ENCODE measurements at regions of chr3 and their contacts with region 1.

Region 1: DNA sequence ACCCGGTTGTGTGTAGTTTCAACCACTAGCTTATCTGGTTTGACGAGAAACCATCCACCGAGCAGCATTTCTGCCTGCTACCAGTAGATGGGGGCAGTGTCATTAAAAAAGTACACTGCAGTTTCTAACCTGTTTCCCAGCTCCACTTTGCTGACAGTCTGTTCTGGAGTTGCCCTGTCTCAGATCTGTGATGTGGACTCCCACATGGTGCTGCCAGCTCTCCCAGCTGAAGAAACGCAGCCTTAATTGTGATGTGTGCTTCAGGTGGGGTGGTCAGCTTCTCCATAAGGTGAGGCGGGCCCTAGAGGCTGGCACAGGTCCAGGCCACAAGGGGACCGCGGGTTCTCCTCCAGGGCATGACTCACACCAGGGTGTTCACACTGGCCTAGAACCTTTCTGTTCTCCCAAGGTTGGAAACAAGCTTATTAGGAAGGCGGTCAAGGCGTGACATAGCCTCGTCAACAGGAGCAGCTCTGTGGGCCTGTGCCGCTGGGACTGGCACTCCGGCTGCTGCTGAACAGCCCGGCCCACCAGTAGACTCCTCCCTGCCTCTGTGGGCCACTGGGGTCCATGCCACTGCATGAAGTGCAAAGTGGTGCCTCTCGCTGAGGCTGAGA is 2.9 kb upstream of the FAM43A start:
- DNase-seq: peak; percentile 89
- H3K4me3 Mint-ChIP-seq: peak overlapping the region; percentile 6
- H3K27ac Mint-ChIP-seq: no peak overlapping the region
- H3K4me1 Mint-ChIP-seq: peaks cover 29% of the 10 kb centered on the region
- H3K27me3 Mint-ChIP-seq: peaks cover 41% of the 10 kb centered on the region
- CTCF ChIP-seq: peak; percentile 96

Region 2: DNA sequence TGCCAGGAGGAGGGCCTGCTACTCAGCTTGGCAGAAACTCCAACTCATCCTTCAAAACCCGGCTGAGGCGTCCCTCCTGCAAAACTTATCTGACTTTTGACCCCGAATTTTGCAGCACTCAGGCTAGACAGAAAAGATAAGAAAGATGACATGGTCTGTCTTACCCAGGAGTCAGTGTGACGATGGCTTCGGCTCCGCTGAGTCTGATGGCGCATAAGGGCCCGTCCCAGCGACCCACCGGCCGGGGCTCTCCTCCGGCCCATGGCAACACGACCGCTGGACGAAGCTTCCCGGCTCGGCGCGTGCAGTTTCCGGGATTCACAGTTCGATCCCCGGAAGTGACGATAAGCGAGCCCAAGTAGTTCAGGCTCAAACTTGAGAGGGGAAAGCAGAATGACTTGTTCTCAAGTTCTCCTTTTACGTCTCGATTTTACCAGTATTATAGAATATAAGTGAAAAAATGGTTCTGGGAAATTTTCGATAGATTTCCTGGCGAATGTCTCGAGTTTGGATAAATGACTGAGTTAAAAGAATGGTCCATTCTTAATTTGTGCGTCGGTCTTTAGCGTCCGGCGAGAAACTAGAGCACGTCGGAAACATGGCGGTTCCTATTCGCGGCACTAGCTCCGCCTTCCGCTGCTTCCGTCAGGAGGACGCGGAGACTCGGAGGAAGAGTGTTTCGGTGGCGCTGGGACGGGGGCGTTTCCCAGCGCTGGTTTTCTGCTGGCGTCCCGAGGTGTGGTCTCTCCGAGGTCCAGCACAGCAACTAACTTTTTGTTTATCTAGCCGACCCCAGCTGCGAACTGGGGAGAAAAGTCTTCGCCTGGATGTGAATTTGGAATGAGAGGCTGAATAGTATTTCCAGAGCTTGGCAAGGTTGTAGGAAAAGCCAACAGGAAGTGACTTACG is 10.6 kb before region 1 on chr3 and contains the start of gene LSG1:
- CTCF ChIA-PET with region 1: interaction called, 83 read pairs
- intact Hi-C with region 1: no loop called
- DNase-seq: peak; percentile 94
- H3K4me3 Mint-ChIP-seq: peak within 1 kb of the TSS; percentile 100
- H3K27ac Mint-ChIP-seq: peak within 1 kb of the TSS; percentile 99
- H3K4me1 Mint-ChIP-seq: peaks cover 53% of the 10 kb centered on the region
- H3K27me3 Mint-ChIP-seq: peaks cover 30% of the 10 kb centered on the region
- CTCF ChIP-seq: no peak
- total RNA-seq, gene LSG1: 86.3 and 90.8 TPM in 2 replicates

Region 3: GRCh38 chr3:194769020-194769643 is 86.3 kb after region 1 on chr3:
- CTCF ChIA-PET with region 1: interaction called, 11 read pairs
- intact Hi-C with region 1: loop called (anchors 10 kb)
- DNase-seq: peak; percentile 95
- H3K4me3 Mint-ChIP-seq: peak overlapping the region; percentile 74
- H3K27ac Mint-ChIP-seq: peak overlapping the region; percentile 39
- H3K4me1 Mint-ChIP-seq: peaks cover 32% of the 10 kb centered on the region
- H3K27me3 Mint-ChIP-seq: peaks cover 35% of the 10 kb centered on the region
- CTCF ChIP-seq: no peak

Region 4: GRCh38 chr3:194871143-194871863 is 188.5 kb after region 1 on chr3:
- CTCF ChIA-PET with region 1: interaction called, 11 read pairs
- intact Hi-C with region 1: no loop called
- DNase-seq: peak; percentile 65
- H3K4me3 Mint-ChIP-seq: peak overlapping the region; percentile 1
- H3K27ac Mint-ChIP-seq: peak overlapping the region; percentile 3
- H3K4me1 Mint-ChIP-seq: peaks cover 22% of the 10 kb centered on the region
- H3K27me3 Mint-ChIP-seq: peaks cover 49% of the 10 kb centered on the region
- CTCF ChIP-seq: no peak

Region 5: DNA sequence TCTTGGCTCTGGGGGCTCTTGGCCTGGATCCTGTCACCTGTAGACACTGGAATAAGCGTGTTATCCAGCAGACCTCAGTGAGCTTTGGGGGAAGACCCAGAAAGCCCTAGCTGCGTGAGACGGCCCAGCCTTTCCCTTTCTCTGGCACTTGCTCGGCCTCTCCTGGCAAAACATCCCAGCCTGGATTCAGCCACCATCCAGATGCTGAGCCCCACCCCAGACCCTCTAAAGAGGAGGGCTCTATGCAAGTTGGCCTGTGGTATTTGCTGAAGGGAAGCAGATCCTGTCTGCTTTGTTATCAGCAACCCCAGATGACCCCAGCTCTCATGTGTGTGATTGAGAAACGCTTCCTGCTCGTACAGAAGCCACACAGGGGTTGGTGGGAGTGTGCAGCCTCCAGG is 270.0 kb after region 1 on chr3:
- CTCF ChIA-PET with region 1: interaction called, 39 read pairs
- intact Hi-C with region 1: loop called (anchors 2 kb)
- DNase-seq: no peak
- H3K4me3 Mint-ChIP-seq: no peak overlapping the region
- H3K27ac Mint-ChIP-seq: no peak overlapping the region
- H3K4me1 Mint-ChIP-seq: peaks cover 10% of the 10 kb centered on the region
- H3K27me3 Mint-ChIP-seq: peaks cover 49% of the 10 kb centered on the region
- CTCF ChIP-seq: no peak

Region 6: DNA sequence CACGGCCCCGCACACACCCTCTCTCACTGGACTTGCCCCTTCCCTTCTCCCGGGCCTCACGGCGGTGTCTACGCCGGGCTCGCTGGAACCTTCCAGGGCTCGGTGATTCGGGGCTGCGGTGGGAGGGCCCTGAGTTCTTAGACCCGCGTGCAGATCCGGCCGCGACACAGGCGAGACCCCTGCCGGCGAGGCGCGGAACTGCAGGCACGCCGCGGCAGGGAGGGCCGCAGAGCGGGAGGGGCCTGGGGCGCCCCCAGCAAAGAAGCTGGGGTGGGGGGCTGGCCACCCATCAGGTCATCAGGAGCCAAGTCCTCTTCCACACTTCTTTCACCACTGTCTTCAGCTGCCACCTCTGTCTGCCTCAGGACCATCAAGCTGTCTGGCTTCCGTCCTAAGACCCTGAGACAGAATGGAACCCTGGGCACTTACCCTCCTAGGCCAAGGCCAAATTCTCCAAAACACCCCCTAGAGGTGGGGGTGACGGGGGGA is 423.7 kb after region 1 on chr3:
- CTCF ChIA-PET with region 1: interaction called, 29 read pairs
- intact Hi-C with region 1: loop called (anchors 1 kb)
- DNase-seq: peak; percentile 87
- H3K4me3 Mint-ChIP-seq: peak overlapping the region; percentile 63
- H3K27ac Mint-ChIP-seq: peak overlapping the region; percentile 33
- H3K4me1 Mint-ChIP-seq: peaks cover 39% of the 10 kb centered on the region
- H3K27me3 Mint-ChIP-seq: no peaks in the 10 kb centered on the region
- CTCF ChIP-seq: peak; percentile 100

Region 7: DNA sequence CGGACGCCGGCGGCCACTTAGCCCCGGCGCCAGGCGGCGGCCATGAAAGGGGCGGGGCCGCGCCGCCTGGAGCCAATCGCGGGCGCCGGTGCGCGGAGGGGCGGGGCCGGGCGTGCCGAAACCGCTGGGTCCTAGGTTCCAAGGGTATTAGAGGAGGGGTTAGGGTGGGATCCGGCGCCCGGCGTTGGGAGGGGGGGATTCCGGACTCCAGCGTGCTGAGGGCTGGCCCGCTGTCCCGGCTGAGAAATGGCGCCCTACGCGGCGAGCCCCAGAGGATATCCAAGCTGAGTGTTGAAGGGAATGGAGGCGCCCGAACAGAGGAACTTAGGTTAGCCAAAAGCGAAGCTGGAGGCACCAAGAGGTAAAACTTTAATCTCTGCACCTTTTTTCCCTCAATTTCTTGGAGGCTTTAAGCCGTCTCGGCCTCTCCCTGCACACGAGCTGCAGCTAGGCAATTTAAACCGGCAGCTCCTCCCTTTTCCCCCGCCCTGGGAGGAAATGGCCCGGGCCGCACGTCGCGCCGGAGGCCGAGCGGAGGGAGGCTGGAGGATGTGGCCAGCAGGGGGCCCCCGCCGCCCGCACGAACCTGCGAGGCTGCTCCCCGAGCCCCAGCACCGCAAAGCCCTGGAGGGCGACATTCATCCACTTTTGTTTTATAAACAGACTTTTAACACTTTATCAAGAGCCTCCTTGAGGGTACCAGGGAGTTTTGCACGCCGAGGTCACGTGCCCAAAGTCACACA is 588.5 kb after region 1 on chr3 and contains the start of gene XXYLT1:
- CTCF ChIA-PET with region 1: interaction called, 11 read pairs
- intact Hi-C with region 1: no loop called
- DNase-seq: peak; percentile 99
- H3K4me3 Mint-ChIP-seq: peak within 1 kb of the TSS; percentile 85
- H3K27ac Mint-ChIP-seq: peak within 1 kb of the TSS; percentile 71
- H3K4me1 Mint-ChIP-seq: peaks cover 37% of the 10 kb centered on the region
- H3K27me3 Mint-ChIP-seq: no peaks in the 10 kb centered on the region
- CTCF ChIP-seq: peak; percentile 100
- total RNA-seq, gene XXYLT1: 25.9 and 29.2 TPM in 2 replicates